Sigmoid colon (tissue), 7 donors: ENCODE measurements at regions of chr2 and their contacts with region 1.

Region 1: DNA sequence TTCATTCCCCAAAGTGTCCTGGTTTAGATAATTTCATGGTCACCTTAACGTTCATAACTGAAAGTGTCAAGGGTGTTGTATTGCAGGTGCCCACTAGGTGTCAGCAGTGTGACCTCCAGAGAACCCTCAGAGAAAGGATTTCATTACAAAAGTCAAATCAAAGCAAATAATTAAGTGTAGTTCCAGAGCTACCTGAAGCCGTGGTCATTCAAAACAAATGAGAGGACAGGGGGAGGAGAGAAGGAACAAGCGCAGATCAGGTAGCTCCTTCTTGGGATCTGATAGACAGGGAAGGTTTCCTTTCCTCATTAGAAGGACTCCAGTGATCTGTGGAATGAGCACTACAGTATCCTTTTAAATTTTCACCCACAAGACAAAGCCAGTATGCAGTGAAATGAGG is at the start of gene SLC9A4:
- DNase-seq: no peak
- H3K4me3 ChIP-seq: no peak within 1 kb of the TSS
- H3K27ac ChIP-seq: no peak within 1 kb of the TSS
- H3K4me1 ChIP-seq: no peaks in the 10 kb centered on the region
- H3K27me3 ChIP-seq: no peaks in the 10 kb centered on the region
- CTCF ChIP-seq: peak; percentile 15 to 85 (median 70)
- EP300 ChIP-seq: no peak
- POLR2A ChIP-seq: no peak
- total RNA-seq, gene SLC9A4: not detected

Region 2: DNA sequence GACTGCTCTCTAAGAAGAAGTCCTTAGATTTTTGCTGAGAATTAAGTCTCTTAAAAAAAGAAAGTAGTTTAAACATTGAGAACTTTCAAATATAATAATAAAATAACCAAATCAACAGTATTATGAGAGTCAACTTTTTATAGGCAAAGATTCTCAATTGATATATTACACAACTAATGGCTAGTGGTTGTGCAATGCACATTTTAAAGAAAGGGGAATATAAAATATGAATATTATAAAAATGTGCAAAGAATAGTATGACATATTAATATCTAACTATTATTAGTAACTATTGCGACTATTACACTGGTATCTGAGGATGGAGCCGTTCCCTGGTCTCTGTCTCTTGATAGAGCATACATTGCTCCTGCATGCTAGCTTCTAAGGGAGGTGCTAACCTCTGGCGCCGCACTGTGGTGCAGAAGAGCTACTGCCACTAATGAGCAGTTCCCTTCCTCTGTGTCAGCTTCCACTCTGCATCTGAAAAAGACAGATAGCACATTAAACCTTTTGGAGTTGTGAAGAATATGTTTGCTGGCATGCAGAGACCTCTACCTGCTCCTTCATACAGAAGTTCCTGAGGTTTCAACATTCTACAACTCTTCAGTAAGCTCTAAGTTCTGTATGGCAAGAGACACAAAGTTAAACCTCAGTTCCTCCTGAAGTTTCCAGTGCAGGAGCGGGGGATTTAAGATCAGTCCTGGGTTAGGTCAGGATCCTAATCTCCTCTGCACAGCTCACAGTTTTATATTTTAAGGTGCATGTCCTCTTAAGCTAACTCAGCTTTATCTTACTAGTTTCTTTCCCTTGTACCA is 142.8 kb after region 1 on chr2:
- intact Hi-C with region 1: loop called (anchors 10 kb)
- DNase-seq: no peak
- H3K4me3 ChIP-seq: no peak overlapping the region
- H3K27ac ChIP-seq: no peak overlapping the region
- H3K4me1 ChIP-seq: peaks cover 0 to 20% (median 17%) of the 10 kb centered on the region in 4 donors
- H3K27me3 ChIP-seq: peaks cover 13 to 33% (median 14%) of the 10 kb centered on the region in 3 donors
- CTCF ChIP-seq: peak; percentile 6 to 58 (median 57)
- EP300 ChIP-seq: no peak
- POLR2A ChIP-seq: no peak

Region 3: GRCh38 chr2:102703748-102704147 is 230.7 kb after region 1 on chr2:
- intact Hi-C with region 1: loop called (anchors 5 kb)
- DNase-seq: no peak
- H3K4me3 ChIP-seq: no peak overlapping the region
- H3K27ac ChIP-seq: no peak overlapping the region
- H3K4me1 ChIP-seq: no peaks in the 10 kb centered on the region
- H3K27me3 ChIP-seq: peaks cover 0 to 31% (median 6%) of the 10 kb centered on the region in 3 donors
- CTCF ChIP-seq: no peak
- EP300 ChIP-seq: no peak
- POLR2A ChIP-seq: no peak